Mammary epithelial cell (primary cell): ENCODE measurements at regions of chr20 and their contacts with region 1.

Region 1: GRCh38 chr20:32762149-32762753 is at the start of gene DNMT3B:
- DNase-seq: peak; percentile 49
- H3K4me3 ChIP-seq: peak within 1 kb of the TSS; percentile 50 to 64 (median 61)
- H3K27ac ChIP-seq: no peak within 1 kb of the TSS
- H3K4me1 ChIP-seq: peaks cover 10% of the 10 kb centered on the region
- H3K27me3 ChIP-seq: peaks cover 3% of the 10 kb centered on the region
- CTCF ChIP-seq: peak in 1 of 2 donors; percentile 9
- total RNA-seq, gene DNMT3B: 1.2 to 2.0 TPM

Region 2: DNA sequence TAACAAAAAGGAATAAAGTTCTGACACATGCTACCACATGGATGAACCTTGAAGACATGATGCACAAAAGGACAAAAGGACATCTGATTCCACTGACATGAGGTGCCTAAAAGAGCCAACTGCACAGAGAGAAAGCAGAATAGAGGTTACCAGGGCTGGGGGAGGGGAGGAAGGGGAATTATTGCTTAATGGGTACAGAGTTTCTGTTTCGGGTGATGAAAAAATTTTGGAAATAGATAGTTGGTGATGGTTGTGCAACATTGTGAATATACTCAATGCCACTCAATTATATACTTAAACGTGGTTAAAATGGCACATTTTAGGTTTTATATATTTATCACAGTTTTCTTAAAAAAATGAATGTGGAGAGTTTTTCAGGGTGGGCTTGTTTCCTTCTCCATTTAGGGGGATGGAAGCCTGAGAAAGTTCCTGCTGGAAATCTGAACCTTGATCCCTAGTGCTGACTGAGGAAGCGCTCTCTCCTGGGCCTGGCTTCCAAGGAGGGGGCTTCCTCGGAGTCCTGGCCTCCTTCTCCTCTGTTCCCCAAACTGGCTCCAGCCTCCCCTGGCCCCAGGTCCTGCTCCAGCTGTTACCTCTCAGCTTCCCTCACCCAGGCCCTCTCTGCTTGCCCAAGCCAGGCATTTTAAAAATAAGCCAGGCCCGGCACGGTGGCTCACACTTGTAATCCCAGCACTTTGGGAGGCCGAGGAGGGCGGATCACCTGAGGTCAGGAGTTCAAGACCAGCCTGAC is 256.4 kb before region 1 on chr20:
- CTCF ChIA-PET with region 1: no interaction called
- dilution Hi-C with region 1: no loop called
- in situ Hi-C with region 1: no loop called
- intact Hi-C with region 1: no loop called
- DNase-seq: no peak
- H3K4me3 ChIP-seq: no peak overlapping the region
- H3K27ac ChIP-seq: no peak overlapping the region
- H3K4me1 ChIP-seq: peaks cover 3% of the 10 kb centered on the region
- H3K27me3 ChIP-seq: no peaks in the 10 kb centered on the region
- CTCF ChIP-seq: no peak

Region 3: DNA sequence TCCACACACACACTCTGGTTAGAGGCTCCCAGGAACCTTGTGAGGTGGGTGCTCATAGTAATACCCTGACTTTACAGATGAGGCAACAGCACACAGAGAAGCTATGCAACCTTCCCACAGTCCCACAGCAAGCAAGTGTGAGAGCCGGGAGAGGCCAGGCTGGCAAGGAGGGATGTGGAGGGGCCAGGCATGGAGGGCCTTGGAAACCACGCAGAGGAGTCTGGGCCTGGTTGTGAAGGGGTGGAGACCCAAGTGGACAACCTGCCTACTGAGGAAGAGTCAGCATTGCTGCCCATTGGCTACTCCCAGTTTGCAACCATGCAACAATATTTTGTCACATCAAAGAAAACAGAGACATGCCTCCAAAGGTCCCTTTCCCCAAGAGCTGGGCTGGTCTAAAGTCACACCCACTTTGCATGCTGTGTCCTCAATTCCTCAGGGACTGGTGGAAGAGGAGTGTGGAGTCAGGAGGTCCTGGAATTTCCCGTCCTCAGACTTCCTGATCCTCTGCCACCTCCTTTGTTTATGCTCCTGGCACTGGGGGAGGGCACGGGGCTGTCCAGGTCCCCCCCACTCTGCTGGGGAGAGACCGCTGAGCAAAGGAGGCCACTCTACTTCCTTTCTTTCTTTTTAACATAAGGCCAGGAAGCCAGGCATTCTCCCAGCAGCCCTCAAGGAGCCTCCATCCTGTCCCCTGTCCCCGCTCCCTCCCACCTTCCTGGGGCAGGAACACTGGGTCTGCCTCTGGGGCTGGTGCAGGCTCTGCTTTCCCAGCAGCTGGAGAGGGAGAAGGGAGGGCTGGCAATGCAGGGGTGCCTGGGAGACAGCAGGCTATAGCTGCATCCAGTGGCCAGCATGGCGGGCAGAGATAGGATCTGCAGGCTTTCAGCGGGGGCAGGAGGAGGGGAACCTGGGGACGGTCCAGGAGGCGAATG is 245.4 kb before region 1 on chr20:
- CTCF ChIA-PET with region 1: no interaction called
- dilution Hi-C with region 1: loop called (anchors 5 kb)
- in situ Hi-C with region 1: no loop called
- intact Hi-C with region 1: no loop called
- DNase-seq: no peak
- H3K4me3 ChIP-seq: no peak overlapping the region
- H3K27ac ChIP-seq: no peak overlapping the region
- H3K4me1 ChIP-seq: peaks cover 9% of the 10 kb centered on the region
- H3K27me3 ChIP-seq: no peaks in the 10 kb centered on the region
- CTCF ChIP-seq: no peak

Region 4: DNA sequence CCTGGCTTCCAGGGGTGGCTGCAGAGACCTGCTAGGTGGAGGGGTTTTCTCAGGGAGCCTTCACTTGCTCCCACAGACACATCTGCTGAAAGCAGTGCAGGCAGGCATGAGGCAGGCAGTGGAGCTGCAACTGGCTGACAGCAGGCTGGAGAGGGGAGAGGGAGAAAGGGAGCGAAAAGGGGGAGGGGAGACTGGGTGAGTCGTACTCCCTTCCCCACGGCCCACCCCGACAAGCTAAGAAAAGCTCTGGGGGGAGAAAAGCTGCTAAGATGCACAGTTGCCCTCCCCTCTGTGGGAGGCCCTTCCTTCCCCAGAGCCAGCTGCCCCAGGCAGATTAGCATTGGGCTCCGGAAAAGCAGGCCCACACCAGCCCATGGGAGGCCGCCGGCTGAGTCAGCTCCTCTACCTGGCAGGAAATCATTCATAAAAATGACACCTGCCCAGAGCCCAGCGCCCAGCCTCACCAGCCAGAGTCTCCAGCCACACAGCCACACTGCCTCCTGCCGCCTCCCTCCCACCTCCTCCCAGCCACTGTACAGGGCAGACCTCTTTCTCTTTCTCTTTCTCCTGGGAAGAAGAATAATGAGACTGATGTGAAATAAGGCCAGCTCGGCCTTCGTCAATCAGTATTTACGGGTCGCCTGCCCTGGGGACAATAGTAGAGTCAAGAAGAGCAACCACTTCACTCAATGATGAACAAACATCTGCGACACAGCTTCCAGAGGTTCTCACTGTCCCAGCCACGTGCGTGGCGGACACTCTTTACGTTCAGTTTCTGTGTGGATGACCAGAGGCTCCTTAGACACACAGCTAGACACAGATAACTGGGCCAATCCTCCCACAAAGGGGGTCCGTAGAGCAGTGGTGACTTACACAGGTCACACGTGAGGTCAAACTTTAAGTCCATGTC is 80.8 kb before region 1 on chr20:
- CTCF ChIA-PET with region 1: no interaction called
- dilution Hi-C with region 1: no loop called
- in situ Hi-C with region 1: no loop called
- intact Hi-C with region 1: loop called (anchors 5 kb)
- DNase-seq: peak; percentile 78
- H3K4me3 ChIP-seq: no peak overlapping the region
- H3K27ac ChIP-seq: no peak overlapping the region
- H3K4me1 ChIP-seq: peaks cover 20% of the 10 kb centered on the region
- H3K27me3 ChIP-seq: no peaks in the 10 kb centered on the region
- CTCF ChIP-seq: no peak

Region 5: DNA sequence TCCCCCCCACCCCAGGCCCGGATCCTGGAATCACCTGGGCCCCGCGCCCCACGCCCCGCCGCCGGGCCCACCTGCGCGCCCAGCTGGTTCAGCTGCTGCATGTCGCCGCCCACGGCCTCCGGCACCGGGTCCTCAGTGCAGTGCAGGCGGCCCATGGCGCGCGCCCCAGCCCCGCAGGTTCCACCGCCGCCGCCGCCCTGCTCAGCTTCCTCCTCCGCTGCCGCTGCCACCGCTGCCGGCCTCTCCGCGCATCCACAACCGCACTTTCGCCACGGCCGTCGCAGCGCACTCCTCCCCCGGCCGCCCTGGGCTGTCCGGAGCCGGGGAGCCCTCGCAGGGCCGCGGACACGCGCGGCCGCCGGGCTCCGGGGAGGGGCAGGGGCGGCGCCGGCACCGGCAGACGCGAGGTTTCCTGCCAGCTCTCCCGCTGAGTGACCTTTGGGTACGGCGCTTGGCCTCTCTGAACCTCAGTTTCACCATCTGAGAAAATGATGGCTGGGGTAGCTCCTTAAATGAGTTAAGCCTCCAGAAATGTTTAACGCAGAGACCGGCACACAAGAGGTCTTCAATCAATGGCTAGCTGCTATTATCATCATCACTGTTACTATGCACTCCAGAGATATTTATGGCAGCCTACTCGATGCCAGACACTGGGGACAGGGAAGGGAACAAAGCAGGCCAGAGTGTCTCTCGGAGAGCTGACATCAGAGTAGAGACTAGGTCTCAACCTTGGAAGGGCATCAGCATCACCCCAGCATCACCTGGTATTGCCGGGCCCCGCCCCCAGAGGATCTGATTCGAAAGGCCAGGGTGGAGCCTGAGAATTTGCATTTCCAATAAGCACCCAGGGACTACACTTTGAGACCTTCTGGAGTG is 18.8 kb before region 1 on chr20 and contains the start of gene COMMD7:
- CTCF ChIA-PET with region 1: no interaction called
- dilution Hi-C with region 1: no loop called
- in situ Hi-C with region 1: no loop called
- intact Hi-C with region 1: loop called (anchors 2 kb)
- DNase-seq: peak; percentile 47
- H3K4me3 ChIP-seq: peak within 1 kb of the TSS; percentile 61 to 66 (median 64)
- H3K27ac ChIP-seq: no peak within 1 kb of the TSS
- H3K4me1 ChIP-seq: peaks cover 11% of the 10 kb centered on the region
- H3K27me3 ChIP-seq: no peaks in the 10 kb centered on the region
- CTCF ChIP-seq: no peak
- total RNA-seq, gene COMMD7: 29.4 to 29.5 TPM

Region 6: GRCh38 chr20:32796981-32797451 is 34.8 kb after region 1 on chr20:
- CTCF ChIA-PET with region 1: no interaction called
- dilution Hi-C with region 1: loop called (anchors 5 kb)
- in situ Hi-C with region 1: no loop called
- intact Hi-C with region 1: no loop called
- DNase-seq: no peak
- H3K4me3 ChIP-seq: no peak overlapping the region
- H3K27ac ChIP-seq: no peak overlapping the region
- H3K4me1 ChIP-seq: peaks cover 32% of the 10 kb centered on the region
- H3K27me3 ChIP-seq: no peaks in the 10 kb centered on the region
- CTCF ChIP-seq: no peak